ENCODE measurements at regions of chr19 and their contacts with region 1.

Region 1: DNA sequence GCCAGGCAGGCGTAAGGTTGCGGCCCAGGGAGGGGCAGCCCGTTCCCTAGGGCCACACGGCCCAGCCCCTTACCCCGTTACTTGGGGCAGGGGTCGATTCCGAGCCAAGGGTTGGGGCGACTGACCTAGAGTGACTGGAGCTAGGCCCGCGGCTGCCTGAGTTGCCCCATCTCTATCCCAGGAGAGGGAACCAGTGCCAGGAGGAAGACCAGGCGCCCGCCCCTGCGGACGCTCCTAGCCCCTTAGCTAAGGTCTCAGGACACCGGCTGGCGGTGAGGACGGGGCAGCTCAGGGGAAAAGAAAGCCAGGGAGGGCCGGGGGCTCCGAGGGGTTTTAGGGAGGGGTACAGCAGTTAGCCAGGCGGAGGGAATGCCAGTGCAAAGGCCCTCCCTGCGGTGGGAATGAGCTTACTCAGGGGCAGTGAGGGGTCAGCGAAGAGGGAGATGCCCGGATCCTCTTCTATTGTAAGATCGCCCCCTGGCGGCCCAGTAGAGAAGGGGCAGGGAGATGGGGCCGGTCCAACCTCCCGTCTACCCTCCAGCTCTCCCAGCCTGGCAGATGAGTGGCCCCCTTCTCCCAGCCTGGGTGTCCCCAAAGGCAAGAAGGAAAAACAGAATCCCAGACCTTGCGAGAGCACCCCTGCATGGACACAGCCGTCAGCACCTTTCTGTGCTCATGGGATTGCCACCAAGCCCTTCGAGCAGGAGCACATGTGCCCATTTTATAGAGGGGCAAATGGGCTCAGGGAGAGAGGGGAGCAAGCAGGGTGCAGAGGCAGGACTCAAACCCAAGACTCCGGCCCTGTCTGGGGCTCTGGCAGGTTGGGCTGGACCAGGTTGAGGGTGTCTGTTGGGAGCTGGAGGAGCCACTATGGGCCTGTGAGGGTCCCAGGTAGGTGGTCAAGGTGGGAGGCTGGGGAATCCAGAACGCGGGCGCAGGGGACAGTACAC is 16.3 kb downstream of the CILP2 start:
- DNase-seq: peak; percentile 70
- ATAC-seq: peak; percentile 61
- H3K4me3 Mint-ChIP-seq: no peak overlapping the region
- H3K27ac Mint-ChIP-seq: no peak overlapping the region
- H3K4me1 Mint-ChIP-seq: peaks cover 4% of the 10 kb centered on the region
- H3K27me3 Mint-ChIP-seq: no peaks in the 10 kb centered on the region

Region 2: GRCh38 chr19:19540715-19541440 is 13.5 kb before region 1 on chr19:
- CTCF ChIA-PET with region 1: interaction called, 119 read pairs
- DNase-seq: peak; percentile 86
- ATAC-seq: peak; percentile 88
- H3K4me3 Mint-ChIP-seq: peak overlapping the region; percentile 59
- H3K27ac Mint-ChIP-seq: peak overlapping the region; percentile 65
- H3K4me1 Mint-ChIP-seq: peaks cover 25% of the 10 kb centered on the region
- H3K27me3 Mint-ChIP-seq: peaks cover 19% of the 10 kb centered on the region

Region 3: DNA sequence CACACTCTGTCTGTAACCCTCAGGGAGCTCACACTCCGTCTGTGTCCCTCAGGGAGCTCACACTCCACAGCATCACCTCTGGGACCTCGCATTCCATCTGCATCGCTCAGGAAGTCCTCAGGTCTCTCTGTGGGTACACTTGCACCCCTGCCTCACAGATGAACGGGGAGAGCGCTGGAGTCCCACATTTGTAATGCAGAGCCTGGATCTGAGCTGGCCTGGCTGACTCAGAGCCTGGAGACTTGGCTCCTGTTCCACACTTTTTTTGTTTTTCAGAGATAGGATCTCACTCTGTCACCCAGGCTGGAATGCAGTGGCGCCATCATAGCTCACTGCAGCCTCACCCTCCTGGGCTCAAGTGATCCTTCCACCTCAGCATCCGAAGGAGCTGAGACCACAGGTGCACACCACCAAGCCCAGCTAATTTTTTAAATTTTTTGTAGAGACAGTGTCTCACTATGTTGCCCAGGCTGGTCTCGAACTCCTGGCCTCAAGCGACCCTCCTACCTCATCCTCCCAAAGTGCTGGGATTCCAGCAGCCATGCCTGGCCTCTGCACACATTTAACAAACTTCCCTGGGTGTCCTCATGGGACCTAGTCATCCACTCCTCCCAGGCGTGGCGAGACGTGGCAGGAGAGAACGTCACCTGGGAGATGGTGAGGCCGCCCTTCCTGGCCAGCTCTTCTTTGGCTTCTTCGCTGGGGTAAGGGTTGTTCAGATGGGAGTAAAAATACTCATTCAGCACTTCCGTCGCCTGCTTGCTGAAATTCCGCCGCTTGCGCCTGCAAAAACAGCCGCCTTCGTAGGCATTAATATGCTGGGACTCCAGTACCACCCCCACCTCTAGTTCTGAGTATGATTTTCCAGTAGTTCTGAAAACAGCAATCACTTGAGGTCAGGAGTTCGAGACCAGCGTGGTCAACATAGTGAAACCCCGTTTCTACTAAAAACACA is 14.7 kb after region 1 on chr19:
- CTCF ChIA-PET with region 1: interaction called, 37 read pairs
- DNase-seq: no peak
- ATAC-seq: no peak
- H3K4me3 Mint-ChIP-seq: no peak overlapping the region
- H3K27ac Mint-ChIP-seq: no peak overlapping the region
- H3K4me1 Mint-ChIP-seq: peaks cover 6% of the 10 kb centered on the region
- H3K27me3 Mint-ChIP-seq: no peaks in the 10 kb centered on the region

Region 4: GRCh38 chr19:19591133-19591825 is 36.9 kb after region 1 on chr19:
- CTCF ChIA-PET with region 1: interaction called, 16 read pairs
- DNase-seq: peak; percentile 88
- ATAC-seq: peak; percentile 91
- H3K4me3 Mint-ChIP-seq: peak overlapping the region; percentile 16
- H3K27ac Mint-ChIP-seq: peak overlapping the region; percentile 92
- H3K4me1 Mint-ChIP-seq: peaks cover 70% of the 10 kb centered on the region
- H3K27me3 Mint-ChIP-seq: no peaks in the 10 kb centered on the region

Region 5: GRCh38 chr19:19677579-19677978 is 123.2 kb after region 1 on chr19:
- CTCF ChIA-PET with region 1: no interaction called
- DNase-seq: peak; percentile 14
- ATAC-seq: no peak
- H3K4me3 Mint-ChIP-seq: no peak overlapping the region
- H3K27ac Mint-ChIP-seq: peak overlapping the region; percentile 32
- H3K4me1 Mint-ChIP-seq: peaks cover 17% of the 10 kb centered on the region
- H3K27me3 Mint-ChIP-seq: no peaks in the 10 kb centered on the region